GM12878 (cell line): ENCODE measurements at regions of chr1 and their contacts with region 1.

Region 1: GRCh38 chr1:21022279-21023040 is 154.2 kb downstream of the EIF4G3 start:
- DNase-seq: peak; percentile 81
- ATAC-seq: peak; percentile 99
- H3K4me3 ChIP-seq: peak overlapping the region; percentile 24
- H3K27ac ChIP-seq: peak overlapping the region; percentile 76
- H3K4me1 ChIP-seq: peaks cover 10% of the 10 kb centered on the region
- H3K27me3 ChIP-seq: no peaks in the 10 kb centered on the region
- CTCF ChIP-seq: no peak
- EP300 ChIP-seq: peak; percentile 58 to 70; a peak in 3 of 4 replicates
- POLR2A ChIP-seq: 0 out of 2 replicates have a peak, but pooled peaks have one; percentile 27
- RAD21 ChIP-seq: 0 out of 2 replicates have a peak, but pooled peaks have one; percentile 0

Region 2: GRCh38 chr1:20913242-20913641 is 109.2 kb before region 1 on chr1:
- CTCF ChIA-PET with region 1: no interaction called
- POLR2A ChIA-PET with region 1: no interaction called
- RAD21 ChIA-PET with region 1: no interaction called
- SMC1A ChIA-PET with region 1: no interaction called
- in situ Hi-C with region 1: no loop called
- intact Hi-C with region 1: no loop called
- DNase-seq: no peak
- ATAC-seq: no peak
- H3K4me3 ChIP-seq: no peak overlapping the region
- H3K27ac ChIP-seq: no peak overlapping the region
- H3K4me1 ChIP-seq: no peaks in the 10 kb centered on the region
- H3K27me3 ChIP-seq: no peaks in the 10 kb centered on the region
- CTCF ChIP-seq: no peak
- EP300 ChIP-seq: no peak
- POLR2A ChIP-seq: no peak
- RAD21 ChIP-seq: no peak

Region 3: DNA sequence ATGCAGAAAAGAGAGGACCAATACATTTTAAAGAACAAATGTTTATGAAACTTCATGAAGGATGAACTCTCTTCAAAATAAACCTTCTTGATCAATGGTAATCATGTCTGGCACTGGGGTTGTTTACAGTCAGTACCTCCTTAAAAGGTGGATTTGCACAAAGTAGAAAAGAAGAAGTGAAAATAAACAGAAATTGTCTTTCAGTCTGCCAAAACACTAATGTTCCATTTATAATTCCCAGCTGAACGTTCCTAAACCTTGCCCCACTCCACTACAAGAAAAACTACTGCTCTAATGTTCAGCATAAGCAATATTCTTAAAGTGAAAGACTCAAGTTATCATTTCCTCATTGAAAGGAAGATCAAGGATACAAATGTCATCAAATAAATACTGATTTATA is 68.0 kb after region 1 on chr1:
- CTCF ChIA-PET with region 1: interaction called, 3 read pairs
- POLR2A ChIA-PET with region 1: interaction called, 10 read pairs
- RAD21 ChIA-PET with region 1: no interaction called
- SMC1A ChIA-PET with region 1: no interaction called
- in situ Hi-C with region 1: no loop called
- intact Hi-C with region 1: no loop called
- DNase-seq: no peak
- ATAC-seq: peak; percentile 72
- H3K4me3 ChIP-seq: no peak overlapping the region
- H3K27ac ChIP-seq: 0 out of 2 replicates have a peak overlapping the region, but pooled peaks have one; percentile 14
- H3K4me1 ChIP-seq: no peaks in the 10 kb centered on the region
- H3K27me3 ChIP-seq: no peaks in the 10 kb centered on the region
- CTCF ChIP-seq: no peak
- EP300 ChIP-seq: no peak
- POLR2A ChIP-seq: no peak
- RAD21 ChIP-seq: no peak

Region 4: GRCh38 chr1:21100481-21100921 is 78.0 kb after region 1 on chr1:
- CTCF ChIA-PET with region 1: no interaction called
- POLR2A ChIA-PET with region 1: no interaction called
- RAD21 ChIA-PET with region 1: no interaction called
- SMC1A ChIA-PET with region 1: no interaction called
- in situ Hi-C with region 1: no loop called
- intact Hi-C with region 1: no loop called
- DNase-seq: no peak
- ATAC-seq: no peak
- H3K4me3 ChIP-seq: no peak overlapping the region
- H3K27ac ChIP-seq: no peak overlapping the region
- H3K4me1 ChIP-seq: peaks cover 3% of the 10 kb centered on the region; the same call in 1 of the 2 replicates
- H3K27me3 ChIP-seq: no peaks in the 10 kb centered on the region
- CTCF ChIP-seq: no peak
- EP300 ChIP-seq: no peak
- POLR2A ChIP-seq: no peak
- RAD21 ChIP-seq: no peak